ENCODE measurements at regions of chr17 and their contacts with region 1.

Region 1: GRCh38 chr17:4074831-4075495 is 67.9 kb downstream of the ZZEF1 start:
- DNase-seq: peak; percentile 56
- CTCF ChIP-seq: peak; percentile 74

Region 2: GRCh38 chr17:3935140-3935542 is 139.8 kb before region 1 on chr17:
- CTCF ChIA-PET with region 1: interaction called, 13 read pairs
- POLR2A ChIA-PET with region 1: no interaction called
- DNase-seq: peak; percentile 68
- CTCF ChIP-seq: peak; percentile 61

Region 3: DNA sequence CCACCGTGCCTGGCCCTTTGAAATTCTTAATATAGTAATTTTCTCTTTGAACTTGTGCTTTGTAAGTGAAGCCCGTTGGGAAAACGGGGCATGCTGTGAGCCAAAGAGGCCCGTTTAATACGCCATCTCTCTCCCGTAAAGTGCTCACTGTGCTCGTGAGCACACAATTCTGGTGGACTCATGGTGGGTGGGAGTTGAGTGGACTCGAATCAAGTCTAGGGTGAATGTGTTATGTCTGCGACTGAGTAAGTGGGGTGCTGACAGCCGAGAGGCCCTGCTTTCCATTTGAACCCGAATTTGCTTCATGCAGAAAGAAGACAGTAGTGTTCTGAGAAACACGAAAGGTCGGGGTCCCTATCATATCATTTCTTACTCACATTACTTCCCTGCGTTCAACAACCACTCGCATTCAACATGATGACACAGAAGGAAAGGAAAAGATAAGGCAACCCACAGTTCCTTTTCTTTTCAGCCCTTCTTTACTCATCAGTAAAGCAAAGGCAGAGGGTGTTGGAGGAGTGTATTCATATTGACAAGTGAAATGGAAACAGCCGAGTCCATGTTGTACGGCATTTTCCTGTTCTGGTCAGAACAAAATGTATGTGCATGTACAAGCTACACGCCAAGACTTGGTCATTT is 106.0 kb before region 1 on chr17:
- CTCF ChIA-PET with region 1: no interaction called
- POLR2A ChIA-PET with region 1: no interaction called
- DNase-seq: no peak
- CTCF ChIP-seq: no peak

Region 4: GRCh38 chr17:4009186-4009785 is 65.7 kb before region 1 on chr17:
- CTCF ChIA-PET with region 1: no interaction called
- POLR2A ChIA-PET with region 1: no interaction called
- DNase-seq: no peak
- CTCF ChIP-seq: no peak

Region 5: GRCh38 chr17:4023220-4023619 is 51.7 kb before region 1 on chr17:
- CTCF ChIA-PET with region 1: interaction called, 12 read pairs
- POLR2A ChIA-PET with region 1: no interaction called
- DNase-seq: no peak
- CTCF ChIP-seq: no peak

Region 6: DNA sequence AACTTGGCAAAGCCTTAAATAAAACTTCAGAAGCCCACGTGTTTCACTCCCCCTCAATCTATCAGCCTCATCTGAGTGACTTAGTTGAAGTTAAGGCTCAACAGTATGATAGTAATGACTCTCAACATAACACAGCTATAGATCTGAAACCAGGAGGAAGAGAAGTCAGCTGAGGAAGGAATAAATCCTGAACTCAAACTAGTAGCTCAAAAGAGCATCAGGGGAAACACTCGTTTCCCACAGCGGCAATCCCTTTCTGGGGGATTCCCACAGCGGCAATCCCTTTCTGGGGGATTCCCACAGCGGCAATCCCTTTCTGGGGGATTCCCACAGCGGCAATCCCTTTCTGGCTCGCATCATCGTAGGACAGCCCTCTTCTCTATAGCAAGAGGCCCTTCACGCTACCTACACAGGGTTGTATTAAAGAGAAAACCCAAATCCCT is 11.1 kb after region 1 on chr17:
- CTCF ChIA-PET with region 1: interaction called, 25 read pairs
- POLR2A ChIA-PET with region 1: no interaction called
- DNase-seq: no peak
- CTCF ChIP-seq: no peak